ENCODE measurements at regions of chr2 and their contacts with region 1.

Region 1: GRCh38 chr2:73202156-73203054 is at the start of gene NOTO:
- DNase-seq: peak in 1 of 35 experiments; percentile 15
- ATAC-seq: peak; percentile 53 to 60 (median 56)
- H3K4me3 ChIP-seq: no peak within 1 kb of the TSS
- H3K4me3 Mint-ChIP-seq: peak within 1 kb of the TSS; percentile 46 to 72 (median 60)
- H3K27ac ChIP-seq: no peak within 1 kb of the TSS
- H3K27ac Mint-ChIP-seq: no peak within 1 kb of the TSS
- H3K4me1 ChIP-seq: peaks cover 0 to 15% of the 10 kb centered on the region in 2 experiments
- H3K4me1 Mint-ChIP-seq: peaks cover 6 to 11% (median 9%) of the 10 kb centered on the region in 3 donors
- H3K27me3 ChIP-seq: peaks cover 15 to 60% of the 10 kb centered on the region in 2 experiments
- H3K27me3 Mint-ChIP-seq: peaks cover 41 to 51% of the 10 kb centered on the region in 2 donors
- total RNA-seq, gene NOTO: not detected

Region 2: DNA sequence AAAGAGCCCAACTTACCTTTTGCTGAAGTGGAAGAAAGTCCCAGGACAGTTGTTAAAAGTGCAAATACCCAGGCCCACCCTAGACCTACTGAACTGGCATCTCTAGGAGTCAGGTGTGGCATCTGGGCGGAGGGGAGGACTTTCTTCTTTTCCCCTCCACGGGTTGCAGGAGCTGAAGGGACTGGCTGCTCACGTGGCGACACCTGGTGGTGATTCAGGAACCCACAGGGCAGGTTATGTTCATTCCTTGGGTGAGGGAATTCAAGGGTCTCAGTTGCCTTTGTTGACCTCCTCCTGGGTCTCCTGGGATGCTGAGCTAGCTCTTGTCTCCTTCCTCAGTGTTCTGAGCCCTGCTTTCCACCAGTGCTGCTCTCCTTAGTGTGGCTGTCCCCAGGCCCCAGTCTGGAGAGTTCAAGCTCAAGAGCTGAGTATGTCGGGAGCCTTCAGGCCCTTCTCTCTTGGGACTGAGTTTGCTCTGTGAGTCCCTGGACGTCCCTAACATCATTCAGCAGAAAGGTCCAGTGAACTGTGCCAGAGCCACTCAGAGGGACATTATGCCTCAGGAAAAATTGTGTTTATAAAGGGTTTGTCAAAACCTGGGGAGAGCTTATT is 1692.1 kb before region 1 on chr2:
- CTCF ChIA-PET with region 1: interaction called in 1 of 2 experiments, 11 read pairs
- POLR2A ChIA-PET with region 1: no interaction called
- DNase-seq: peak; percentile 26 to 82 (median 62)
- ATAC-seq: peak; percentile 46 to 65 (median 54)
- H3K4me3 ChIP-seq: no peak overlapping the region
- H3K4me3 Mint-ChIP-seq: no peak overlapping the region
- H3K27ac ChIP-seq: no peak overlapping the region
- H3K27ac Mint-ChIP-seq: no peak overlapping the region
- H3K4me1 ChIP-seq: no peaks in the 10 kb centered on the region
- H3K4me1 Mint-ChIP-seq: peaks cover 0 to 5% (median 3%) of the 10 kb centered on the region in 3 donors
- H3K27me3 ChIP-seq: peaks cover 0 to 16% of the 10 kb centered on the region in 2 experiments
- H3K27me3 Mint-ChIP-seq: peaks cover 7 to 10% of the 10 kb centered on the region in 2 donors

Region 3: GRCh38 chr2:73142937-73143336 is 59.5 kb before region 1 on chr2:
- CTCF ChIA-PET with region 1: no interaction called
- POLR2A ChIA-PET with region 1: no interaction called
- DNase-seq: no peak
- ATAC-seq: no peak
- H3K4me3 ChIP-seq: no peak overlapping the region
- H3K4me3 Mint-ChIP-seq: no peak overlapping the region
- H3K27ac ChIP-seq: no peak overlapping the region
- H3K27ac Mint-ChIP-seq: no peak overlapping the region
- H3K4me1 ChIP-seq: no peaks in the 10 kb centered on the region
- H3K4me1 Mint-ChIP-seq: peaks cover 0 to 2% (median 0%) of the 10 kb centered on the region in 3 donors
- H3K27me3 ChIP-seq: no peaks in the 10 kb centered on the region
- H3K27me3 Mint-ChIP-seq: peaks cover 12% of the 10 kb centered on the region in 2 donors

Region 4: DNA sequence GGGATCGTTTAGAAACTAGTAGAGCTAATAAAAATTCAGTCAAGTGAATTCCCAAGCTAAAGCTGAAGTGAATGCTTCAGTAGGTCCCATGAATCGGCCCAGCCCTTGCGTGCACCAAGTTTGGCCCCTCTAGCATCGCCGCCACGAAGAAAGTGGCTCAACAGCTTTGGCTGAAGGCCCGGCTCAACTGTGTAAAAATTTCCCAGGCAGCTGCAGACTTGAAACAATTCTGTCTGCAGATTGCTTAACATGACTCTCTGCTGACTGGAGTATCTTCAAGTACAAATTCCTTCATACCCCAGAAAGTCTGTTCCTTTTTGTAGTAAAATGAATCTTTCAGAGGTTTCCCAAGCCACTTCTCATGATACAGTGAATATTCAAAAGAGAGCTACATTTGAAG is 215.9 kb after region 1 on chr2:
- CTCF ChIA-PET with region 1: no interaction called
- POLR2A ChIA-PET with region 1: no interaction called
- DNase-seq: no peak
- ATAC-seq: no peak
- H3K4me3 ChIP-seq: no peak overlapping the region
- H3K4me3 Mint-ChIP-seq: no peak overlapping the region
- H3K27ac ChIP-seq: no peak overlapping the region
- H3K27ac Mint-ChIP-seq: no peak overlapping the region
- H3K4me1 ChIP-seq: no peaks in the 10 kb centered on the region
- H3K4me1 Mint-ChIP-seq: peaks cover 0 to 2% (median 0%) of the 10 kb centered on the region in 3 donors
- H3K27me3 ChIP-seq: no peaks in the 10 kb centered on the region
- H3K27me3 Mint-ChIP-seq: no peaks in the 10 kb centered on the region

Region 5: GRCh38 chr2:73716543-73717250 is 514.3 kb after region 1 on chr2:
- CTCF ChIA-PET with region 1: no interaction called
- POLR2A ChIA-PET with region 1: no interaction called
- DNase-seq: no peak
- ATAC-seq: no peak
- H3K4me3 ChIP-seq: no peak overlapping the region
- H3K4me3 Mint-ChIP-seq: no peak overlapping the region
- H3K27ac ChIP-seq: no peak overlapping the region
- H3K27ac Mint-ChIP-seq: no peak overlapping the region
- H3K4me1 ChIP-seq: no peaks in the 10 kb centered on the region
- H3K4me1 Mint-ChIP-seq: no peaks in the 10 kb centered on the region
- H3K27me3 ChIP-seq: peaks cover 0 to 12% of the 10 kb centered on the region in 2 experiments
- H3K27me3 Mint-ChIP-seq: peaks cover 16 to 17% of the 10 kb centered on the region in 2 donors